Spleen (tissue), 13 donors: ENCODE measurements at regions of chr11 and their contacts with region 1.

Region 1: GRCh38 chr11:9160166-9160565 is 68.8 kb upstream of the SCUBE2 start:
- DNase-seq: no peak
- H3K4me3 ChIP-seq: no peak overlapping the region
- H3K27ac ChIP-seq: peak overlapping the region in 5 of 8 donors; percentile 17 to 72 (median 55)
- H3K4me1 ChIP-seq: peaks cover 0 to 39% (median 10%) of the 10 kb centered on the region in 6 donors
- H3K27me3 ChIP-seq: no peaks in the 10 kb centered on the region
- CTCF ChIP-seq: no peak
- POLR2A ChIP-seq: no peak

Region 2: DNA sequence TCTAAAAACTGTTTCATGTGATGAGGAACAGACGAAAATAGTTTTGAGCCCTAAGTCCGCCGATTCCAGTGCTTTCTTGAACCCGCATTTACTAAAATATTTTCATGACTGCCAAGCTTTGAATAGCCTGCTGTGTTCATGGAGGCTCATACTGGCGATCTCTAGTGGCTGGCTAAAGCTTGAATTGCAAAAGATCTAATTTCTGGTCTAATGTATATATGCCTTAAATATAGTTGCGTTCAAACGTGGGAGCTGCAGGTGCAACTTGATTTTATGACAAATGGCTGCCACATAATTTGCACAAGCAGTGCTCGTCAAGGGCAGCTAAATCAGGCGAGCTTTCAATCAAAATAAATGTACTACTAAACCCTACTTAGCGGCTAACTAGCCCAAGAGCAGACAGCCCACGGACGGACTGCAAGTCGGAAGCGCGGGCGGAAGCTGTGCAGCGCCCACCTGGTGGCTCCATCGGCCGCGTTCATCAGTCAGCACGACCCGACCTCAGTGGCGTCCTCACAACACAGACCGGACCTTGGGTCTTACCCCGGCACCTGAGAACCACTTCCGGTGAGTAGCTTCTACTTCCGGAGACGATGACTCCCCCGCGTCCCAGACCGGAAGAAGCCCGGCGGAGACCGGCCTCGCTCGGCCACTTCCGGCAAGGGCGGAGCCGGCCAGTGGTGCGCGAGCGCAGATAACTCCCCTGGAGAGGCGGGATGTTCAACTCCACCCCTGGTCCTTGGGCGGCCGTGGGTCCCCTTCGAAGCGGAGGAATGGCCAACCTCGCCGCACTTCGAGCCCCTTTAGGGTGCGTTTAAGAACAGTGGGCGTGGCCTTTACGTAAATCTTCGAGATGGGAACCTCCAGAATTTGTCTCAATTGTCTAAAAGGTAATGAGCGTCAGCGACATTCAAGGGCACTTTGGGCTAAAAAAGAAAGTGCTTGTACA is 471.5 kb before region 1 on chr11:
- intact Hi-C with region 1: no loop called
- DNase-seq: peak; percentile 99
- H3K4me3 ChIP-seq: peak overlapping the region; percentile 42 to 75 (median 56)
- H3K27ac ChIP-seq: peak overlapping the region; percentile 79 to 92 (median 88)
- H3K4me1 ChIP-seq: peaks cover 17 to 65% (median 53%) of the 10 kb centered on the region in 6 donors
- H3K27me3 ChIP-seq: no peaks in the 10 kb centered on the region
- CTCF ChIP-seq: peak in 4 of 11 experiments; percentile 15 to 43 (median 19)
- POLR2A ChIP-seq: peak in 1 of 3 donors; percentile 13

Region 3: DNA sequence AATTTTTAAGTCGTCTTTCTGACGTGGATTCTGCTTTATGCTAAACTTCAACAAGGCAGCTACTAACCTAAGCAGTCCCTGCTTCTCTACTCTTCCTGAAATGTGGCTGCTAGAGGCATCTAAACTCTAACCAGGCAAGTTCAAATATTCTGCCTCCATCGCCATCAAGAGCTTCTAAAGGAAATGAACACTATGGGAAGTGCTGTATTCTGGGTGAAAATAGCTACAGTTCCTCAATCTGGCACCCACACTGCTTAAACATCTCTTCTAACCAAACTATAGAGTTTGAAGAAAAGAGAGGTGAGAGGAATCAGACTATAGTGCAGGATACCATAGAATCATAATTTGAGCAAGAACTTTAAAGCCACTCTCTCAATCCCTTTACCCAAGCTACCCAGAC is 162.7 kb before region 1 on chr11:
- intact Hi-C with region 1: no loop called
- DNase-seq: no peak
- H3K4me3 ChIP-seq: no peak overlapping the region
- H3K27ac ChIP-seq: no peak overlapping the region
- H3K4me1 ChIP-seq: peaks cover 0 to 9% (median 0%) of the 10 kb centered on the region in 6 donors
- H3K27me3 ChIP-seq: peaks cover 0 to 64% (median 26%) of the 10 kb centered on the region in 7 donors
- CTCF ChIP-seq: no peak
- POLR2A ChIP-seq: no peak

Region 4: DNA sequence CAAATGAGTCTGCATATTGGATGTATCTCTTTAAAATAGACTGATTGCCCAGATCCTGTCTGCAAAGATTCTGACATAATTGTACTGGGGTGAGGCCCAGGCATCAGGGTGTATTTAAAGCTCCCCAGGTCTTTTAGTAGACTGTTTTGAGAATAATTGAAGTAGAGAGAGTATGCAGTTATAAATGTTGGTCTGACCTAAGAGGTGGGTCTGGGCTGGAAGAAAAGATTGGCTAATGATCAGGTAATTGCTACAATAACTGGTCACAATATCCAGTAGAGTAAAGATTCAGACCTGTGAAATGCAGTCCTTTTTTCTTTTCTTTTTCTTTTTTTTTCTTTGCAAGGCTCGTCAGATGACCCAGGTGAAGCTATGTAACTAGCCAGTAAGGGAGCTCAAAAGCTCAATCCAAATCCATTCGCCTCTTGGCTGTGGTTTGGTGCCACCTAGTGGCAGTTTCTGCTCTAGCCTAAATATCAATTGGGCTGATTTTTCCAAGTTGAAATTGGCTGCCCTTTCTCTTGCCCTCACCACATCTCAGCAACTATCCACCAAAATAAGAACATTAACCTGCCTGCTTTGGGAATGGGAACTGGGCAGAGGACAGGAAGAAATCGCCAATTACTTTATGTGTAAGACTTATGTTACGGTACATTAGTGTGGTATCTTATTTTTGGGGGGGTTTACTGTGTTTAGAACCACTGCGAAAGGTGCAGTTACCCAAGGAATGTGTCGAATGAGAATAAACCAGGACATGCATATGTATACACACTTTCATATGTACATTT is 346.5 kb after region 1 on chr11:
- intact Hi-C with region 1: loop called (anchors 10 kb)
- DNase-seq: peak; percentile 82
- H3K4me3 ChIP-seq: no peak overlapping the region
- H3K27ac ChIP-seq: no peak overlapping the region
- H3K4me1 ChIP-seq: peaks cover 0 to 18% (median 6%) of the 10 kb centered on the region in 6 donors
- H3K27me3 ChIP-seq: no peaks in the 10 kb centered on the region
- CTCF ChIP-seq: peak; percentile 64 to 92 (median 84)
- POLR2A ChIP-seq: no peak